Heart right ventricle (tissue), 16 donors: ENCODE measurements at regions of chr6 and their contacts with region 1.

Region 1: GRCh38 chr6:139375232-139376016 is 976 bp upstream of the CITED2 start:
- DNase-seq: peak; percentile 89
- ATAC-seq: peak; percentile 78 to 89 (median 82)
- H3K4me3 ChIP-seq: peak overlapping the region; percentile 69 to 97 (median 92)
- H3K27ac ChIP-seq: peak overlapping the region; percentile 90 to 100 (median 98)
- H3K4me1 ChIP-seq: peaks cover 0 to 32% (median 26%) of the 10 kb centered on the region in 9 donors
- H3K27me3 ChIP-seq: no peaks in the 10 kb centered on the region
- CTCF ChIP-seq: peak in 1 of 9 donors; percentile 9

Region 2: DNA sequence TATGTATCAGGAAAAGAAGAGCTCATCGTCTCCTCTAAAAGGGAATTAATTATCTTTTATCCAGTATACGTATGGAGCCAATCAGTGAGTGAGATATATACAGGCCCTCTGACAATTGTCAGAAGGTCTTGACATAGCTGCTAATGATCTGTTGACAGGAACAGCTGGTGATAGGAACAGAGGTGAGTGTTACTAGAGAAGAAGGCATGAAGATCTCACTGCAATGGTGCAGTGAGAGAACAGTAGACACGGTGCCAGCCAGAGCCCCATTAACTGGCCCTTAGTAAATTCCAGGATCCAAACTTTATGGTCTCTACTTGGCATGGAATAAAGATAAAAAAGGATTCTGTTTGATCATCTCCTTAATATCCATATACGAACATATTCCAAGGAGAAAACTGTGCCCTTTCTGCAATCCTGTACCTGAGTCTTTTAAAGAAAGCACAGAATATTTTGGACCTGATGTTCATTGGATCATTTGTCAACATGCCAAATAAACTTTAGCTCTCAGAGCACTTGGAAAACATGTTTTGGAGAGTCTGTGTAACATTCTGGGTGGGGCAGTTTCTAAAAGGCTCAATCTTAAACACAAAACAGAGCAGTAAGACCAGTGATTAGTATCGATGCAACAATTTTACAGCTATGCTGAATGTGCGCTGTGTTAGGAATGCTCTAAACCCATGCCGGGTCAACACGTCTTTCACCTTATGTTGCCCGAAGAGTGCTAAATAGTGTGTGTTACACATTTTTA is 134.8 kb after region 1 on chr6:
- intact Hi-C with region 1: loop called in 3 of 10 experiments (anchors 2 to 10 kb)
- DNase-seq: peak in 1 of 2 donors; percentile 42
- ATAC-seq: peak; percentile 84 to 99 (median 98)
- H3K4me3 ChIP-seq: no peak overlapping the region
- H3K27ac ChIP-seq: peak overlapping the region in 6 of 10 donors; percentile 5 to 50 (median 38)
- H3K4me1 ChIP-seq: peaks cover 0 to 10% (median 0%) of the 10 kb centered on the region in 9 donors
- H3K27me3 ChIP-seq: no peaks in the 10 kb centered on the region
- CTCF ChIP-seq: no peak

Region 3: GRCh38 chr6:139753198-139753861 is 377.9 kb after region 1 on chr6:
- intact Hi-C with region 1: loop called in 2 of 10 experiments (anchors 5 to 10 kb)
- DNase-seq: no peak
- ATAC-seq: no peak
- H3K4me3 ChIP-seq: no peak overlapping the region
- H3K27ac ChIP-seq: no peak overlapping the region
- H3K4me1 ChIP-seq: peaks cover 0 to 30% (median 16%) of the 10 kb centered on the region in 9 donors
- H3K27me3 ChIP-seq: no peaks in the 10 kb centered on the region
- CTCF ChIP-seq: no peak

Region 4: DNA sequence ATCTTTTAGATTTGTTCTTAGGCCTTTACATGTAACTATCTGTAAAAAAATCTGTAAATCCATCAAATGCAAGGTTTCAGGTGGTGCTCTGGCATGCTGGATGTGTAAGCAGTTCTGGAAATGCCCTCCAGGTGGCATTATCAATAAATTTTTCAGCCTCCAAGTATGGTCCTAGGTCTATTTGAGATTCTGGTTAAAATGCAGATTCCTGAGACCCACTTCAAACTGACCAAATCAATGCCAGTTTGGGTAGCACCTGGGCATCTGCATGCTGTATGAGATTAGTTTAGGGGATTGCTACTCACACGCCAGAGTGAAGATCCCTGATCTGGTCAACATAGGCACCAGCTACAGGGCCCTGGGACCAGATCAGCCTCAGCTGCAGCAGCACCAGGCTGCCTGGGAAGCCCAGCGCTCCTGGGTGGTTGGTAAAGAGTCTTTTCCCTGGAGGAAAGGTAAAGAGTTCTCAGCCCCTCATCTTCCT is 506.3 kb after region 1 on chr6:
- intact Hi-C with region 1: loop called in 7 of 10 experiments (anchors 5 to 10 kb)
- DNase-seq: peak in 1 of 2 donors; percentile 15
- ATAC-seq: peak; percentile 30 to 80 (median 70)
- H3K4me3 ChIP-seq: peak overlapping the region in 1 of 10 donors; percentile 14
- H3K27ac ChIP-seq: peak overlapping the region in 8 of 10 donors; percentile 7 to 87 (median 60)
- H3K4me1 ChIP-seq: peaks cover 7 to 47% (median 20%) of the 10 kb centered on the region in 9 donors
- H3K27me3 ChIP-seq: no peaks in the 10 kb centered on the region
- CTCF ChIP-seq: peak; percentile 53 to 71 (median 60)

Region 5: DNA sequence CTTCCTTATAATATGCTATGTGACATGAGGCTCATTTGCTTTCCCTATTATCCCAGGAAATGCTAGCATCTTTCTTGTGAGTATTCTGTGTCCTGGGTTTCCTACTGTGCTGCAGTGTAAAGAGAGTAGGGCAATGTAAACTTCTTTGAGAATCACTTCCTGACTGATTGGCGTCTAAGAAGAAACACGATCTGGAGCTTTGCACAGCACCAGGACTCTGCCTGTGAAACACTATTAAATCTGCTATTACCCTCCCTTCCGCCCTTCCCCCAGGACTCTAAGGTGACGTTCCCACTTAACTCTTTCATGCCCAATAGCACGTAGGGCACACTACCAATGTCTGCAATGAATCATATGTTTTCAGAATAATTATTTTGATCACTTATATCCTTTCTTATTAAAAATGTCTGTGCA is 606.4 kb after region 1 on chr6:
- intact Hi-C with region 1: loop called in 6 of 10 experiments (anchors 5 to 10 kb)
- DNase-seq: peak in 1 of 2 donors; percentile 40
- ATAC-seq: peak; percentile 41 to 74 (median 59)
- H3K4me3 ChIP-seq: peak overlapping the region in 1 of 10 donors; percentile 1
- H3K27ac ChIP-seq: peak overlapping the region in 8 of 10 donors; percentile 0 to 71 (median 50)
- H3K4me1 ChIP-seq: peaks cover 0 to 56% (median 42%) of the 10 kb centered on the region in 9 donors
- H3K27me3 ChIP-seq: no peaks in the 10 kb centered on the region
- CTCF ChIP-seq: no peak

Region 6: DNA sequence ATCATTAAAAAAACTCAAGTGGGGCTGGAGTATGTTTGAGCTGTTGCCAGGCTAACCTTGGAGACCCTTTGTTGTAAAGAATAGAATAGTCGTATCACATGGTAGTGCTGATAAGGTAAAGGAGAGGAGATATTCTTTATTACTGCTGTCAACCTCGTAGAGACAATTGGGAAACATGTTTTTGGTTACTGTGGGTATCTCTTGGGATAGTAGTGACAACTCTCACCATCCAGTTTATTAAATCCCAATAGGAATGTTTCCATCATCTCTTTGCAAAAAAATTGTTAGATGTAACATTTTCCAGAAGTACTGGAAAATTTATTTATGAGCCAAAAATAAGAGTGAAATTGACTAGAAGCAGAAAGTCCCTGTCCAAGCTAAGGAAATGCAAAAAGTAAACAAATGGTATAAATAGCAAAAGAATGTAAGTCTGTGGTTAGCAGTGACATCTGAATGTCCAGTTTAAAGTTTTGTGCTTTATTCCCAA is 828.3 kb after region 1 on chr6:
- intact Hi-C with region 1: loop called in 2 of 10 experiments (anchors 10 kb)
- DNase-seq: no peak
- ATAC-seq: peak in 2 of 8 donors; percentile 54 to 57
- H3K4me3 ChIP-seq: no peak overlapping the region
- H3K27ac ChIP-seq: peak overlapping the region in 5 of 10 donors; percentile 15 to 57 (median 33)
- H3K4me1 ChIP-seq: peaks cover 0 to 33% (median 22%) of the 10 kb centered on the region in 9 donors
- H3K27me3 ChIP-seq: no peaks in the 10 kb centered on the region
- CTCF ChIP-seq: no peak

Region 7: GRCh38 chr6:140915103-140915502 is 1539.7 kb after region 1 on chr6:
- intact Hi-C with region 1: loop called in 7 of 10 experiments (anchors 5 to 10 kb)
- DNase-seq: no peak
- ATAC-seq: peak in 3 of 8 donors; percentile 49 to 65 (median 59)
- H3K4me3 ChIP-seq: no peak overlapping the region
- H3K27ac ChIP-seq: peak overlapping the region in 5 of 10 donors; percentile 7 to 46 (median 14)
- H3K4me1 ChIP-seq: peaks cover 2 to 17% (median 12%) of the 10 kb centered on the region in 9 donors
- H3K27me3 ChIP-seq: no peaks in the 10 kb centered on the region
- CTCF ChIP-seq: peak in 3 of 9 donors; percentile 10 to 30 (median 27)